ENCODE measurements at regions of chr3 and their contacts with region 1.

Region 1: GRCh38 chr3:108862865-108863798 is 40.5 kb downstream of the TRAT1 start:
- DNase-seq: peak in 4 of 9 donors; percentile 22 to 38 (median 28)
- ATAC-seq: peak; percentile 63
- H3K4me3 ChIP-seq: no peak overlapping the region
- H3K4me3 Mint-ChIP-seq: peak overlapping the region; percentile 25 to 77 (median 64)
- H3K27ac ChIP-seq: peak overlapping the region; percentile 52
- H3K27ac Mint-ChIP-seq: peak overlapping the region; percentile 64 to 93 (median 83)
- H3K4me1 ChIP-seq: peaks cover 8 to 23% of the 10 kb centered on the region in 2 donors
- H3K4me1 Mint-ChIP-seq: peaks cover 29 to 57% (median 53%) of the 10 kb centered on the region in 7 donors
- H3K27me3 ChIP-seq: no peaks in the 10 kb centered on the region
- H3K27me3 Mint-ChIP-seq: no peaks in the 10 kb centered on the region

Region 2: GRCh38 chr3:108528459-108529252 is 334.5 kb before region 1 on chr3:
- CTCF ChIA-PET with region 1: no interaction called
- POLR2A ChIA-PET with region 1: no interaction called
- intact Hi-C with region 1: no loop called
- DNase-seq: no peak
- ATAC-seq: peak; percentile 80
- H3K4me3 ChIP-seq: no peak overlapping the region
- H3K4me3 Mint-ChIP-seq: no peak overlapping the region
- H3K27ac ChIP-seq: no peak overlapping the region
- H3K27ac Mint-ChIP-seq: no peak overlapping the region
- H3K4me1 ChIP-seq: no peaks in the 10 kb centered on the region
- H3K4me1 Mint-ChIP-seq: no peaks in the 10 kb centered on the region
- H3K27me3 ChIP-seq: no peaks in the 10 kb centered on the region
- H3K27me3 Mint-ChIP-seq: peaks cover 29 to 41% (median 36%) of the 10 kb centered on the region in 5 donors

Region 3: GRCh38 chr3:108847187-108847586 is 15.9 kb before region 1 on chr3:
- CTCF ChIA-PET with region 1: no interaction called
- POLR2A ChIA-PET with region 1: interaction called, 5 read pairs
- intact Hi-C with region 1: loop called (anchors 1 to 2 kb)
- DNase-seq: no peak
- ATAC-seq: no peak
- H3K4me3 ChIP-seq: no peak overlapping the region
- H3K4me3 Mint-ChIP-seq: peak overlapping the region in 9 of 10 donors; percentile 12 to 77 (median 54)
- H3K27ac ChIP-seq: peak overlapping the region; percentile 54
- H3K27ac Mint-ChIP-seq: peak overlapping the region; percentile 20 to 93 (median 74)
- H3K4me1 ChIP-seq: peaks cover 16 to 55% of the 10 kb centered on the region in 2 donors
- H3K4me1 Mint-ChIP-seq: peaks cover 39 to 84% (median 74%) of the 10 kb centered on the region in 7 donors
- H3K27me3 ChIP-seq: no peaks in the 10 kb centered on the region
- H3K27me3 Mint-ChIP-seq: no peaks in the 10 kb centered on the region

Region 4: DNA sequence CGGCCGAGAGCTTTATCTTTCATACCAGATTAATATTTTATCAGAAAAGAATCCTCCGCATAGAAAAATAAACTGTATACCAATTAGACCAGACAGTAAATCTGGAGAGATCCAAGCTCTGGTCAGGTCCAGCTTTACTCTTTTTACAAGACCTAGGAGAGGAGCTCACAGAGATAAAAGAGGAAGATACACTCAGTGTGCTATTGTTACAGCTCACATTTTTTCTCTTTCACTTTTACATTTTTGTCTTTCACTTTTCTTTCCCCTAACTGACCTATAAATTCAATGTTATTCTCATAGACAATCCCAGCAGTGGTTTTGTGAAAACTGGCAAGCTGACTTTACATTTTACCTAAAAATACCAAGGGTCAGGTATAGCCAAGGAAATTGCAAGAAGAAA is 34.8 kb after region 1 on chr3:
- CTCF ChIA-PET with region 1: no interaction called
- POLR2A ChIA-PET with region 1: no interaction called
- intact Hi-C with region 1: loop called in 1 of 2 experiments (anchors 5 kb)
- DNase-seq: no peak
- ATAC-seq: no peak
- H3K4me3 ChIP-seq: no peak overlapping the region
- H3K4me3 Mint-ChIP-seq: peak overlapping the region in 1 of 10 donors; percentile 54
- H3K27ac ChIP-seq: no peak overlapping the region
- H3K27ac Mint-ChIP-seq: peak overlapping the region in 2 of 9 donors; percentile 2 to 50
- H3K4me1 ChIP-seq: no peaks in the 10 kb centered on the region
- H3K4me1 Mint-ChIP-seq: peaks cover 6 to 22% (median 11%) of the 10 kb centered on the region in 7 donors
- H3K27me3 ChIP-seq: no peaks in the 10 kb centered on the region
- H3K27me3 Mint-ChIP-seq: peaks cover 0 to 4% (median 0%) of the 10 kb centered on the region in 5 donors

Measured in naive thymus-derived CD4-positive, alpha-beta T cell (primary cell).